Activated CD4-positive, alpha-beta T cell treated with anti-CD3 and anti-CD28 coated beads, Interleukin-2, amount 10 ng/mL, durations not matched to agents 24 days and 14 days (primary cell): ENCODE measurements at regions of chr1 and their contacts with region 1.

Region 1: DNA sequence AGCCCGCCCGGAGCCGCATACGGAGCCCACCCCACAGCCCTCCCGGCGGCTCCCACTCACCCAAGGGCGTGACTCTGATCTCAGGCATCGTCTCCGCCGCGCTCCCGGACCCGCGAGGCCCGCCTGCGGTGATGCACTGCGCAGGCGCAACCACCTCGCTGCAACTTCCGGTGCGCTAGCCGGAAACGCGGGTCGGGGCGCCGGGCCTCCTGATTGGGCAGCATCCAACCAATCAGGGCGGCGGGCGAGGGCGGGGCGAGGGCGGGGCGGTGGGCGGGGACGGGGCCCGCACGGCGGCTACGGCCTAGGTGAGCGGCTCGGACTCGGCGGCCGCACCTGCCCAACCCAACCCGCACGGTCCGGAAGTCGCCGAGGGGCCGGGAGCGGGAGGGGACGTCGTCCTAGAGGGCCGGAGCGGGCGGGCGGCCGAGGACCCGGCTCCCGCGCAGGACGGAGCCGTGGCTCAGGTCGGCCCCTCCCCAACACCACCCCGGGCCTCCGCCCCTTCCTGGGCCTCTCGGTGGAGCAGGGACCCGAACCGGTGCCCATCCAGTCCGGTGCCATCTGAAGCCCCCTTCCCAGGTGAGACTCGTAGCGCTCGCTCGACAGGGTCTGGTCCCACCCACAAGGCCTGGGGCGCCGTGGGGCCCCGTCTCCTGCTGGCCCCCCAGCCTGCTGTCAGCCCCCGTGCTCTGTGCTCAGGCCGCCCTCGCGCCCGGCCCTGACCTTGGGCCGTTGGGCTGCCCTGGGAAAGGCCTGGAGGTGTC is at the starts of genes CPTP and INTS11:
- DNase-seq: peak; percentile 99
- H3K4me3 Mint-ChIP-seq: peak within 1 kb of the TSS; percentile 92
- H3K27ac Mint-ChIP-seq: peak within 1 kb of the TSS; percentile 92
- H3K4me1 Mint-ChIP-seq: peaks cover 18% of the 10 kb centered on the region
- H3K27me3 Mint-ChIP-seq: no peaks in the 10 kb centered on the region
- total RNA-seq, gene CPTP: 11.5 and 12.3 TPM in 2 replicates
- total RNA-seq, gene INTS11: 145 TPM in 2 replicates

Region 2: GRCh38 chr1:1307908-1308755 is 16.6 kb before region 1 on chr1 and contains the starts of genes ACAP3 and PUSL1:
- intact Hi-C with region 1: loop called (anchors 2 kb)
- DNase-seq: peak; percentile 96
- H3K4me3 Mint-ChIP-seq: peak within 1 kb of the TSS; percentile 88
- H3K27ac Mint-ChIP-seq: peak within 1 kb of the TSS; percentile 90
- H3K4me1 Mint-ChIP-seq: peaks cover 18% of the 10 kb centered on the region
- H3K27me3 Mint-ChIP-seq: no peaks in the 10 kb centered on the region
- total RNA-seq, gene ACAP3: 54.1 and 55.7 TPM in 2 replicates
- total RNA-seq, gene PUSL1: 33.4 and 35.2 TPM in 2 replicates

Region 3: GRCh38 chr1:1517973-1518620 is 193.4 kb after region 1 on chr1:
- intact Hi-C with region 1: no loop called
- DNase-seq: no peak
- H3K4me3 Mint-ChIP-seq: no peak overlapping the region
- H3K27ac Mint-ChIP-seq: no peak overlapping the region
- H3K4me1 Mint-ChIP-seq: peaks cover 2% of the 10 kb centered on the region
- H3K27me3 Mint-ChIP-seq: no peaks in the 10 kb centered on the region